Aorta (tissue), 5 donors: ENCODE measurements at regions of chr11 and their contacts with region 1.

Region 1: GRCh38 chr11:47642099-47642855 is at the start of gene MTCH2:
- DNase-seq: peak; percentile 97 to 98
- ATAC-seq: peak; percentile 99
- H3K4me3 ChIP-seq: peak within 1 kb of the TSS; percentile 23 to 58
- H3K27ac ChIP-seq: peak within 1 kb of the TSS; percentile 63 to 84
- H3K4me1 ChIP-seq: no peaks in the 10 kb centered on the region
- H3K27me3 ChIP-seq: no peaks in the 10 kb centered on the region
- total RNA-seq, gene MTCH2: 34.8 to 43.7 TPM

Region 2: DNA sequence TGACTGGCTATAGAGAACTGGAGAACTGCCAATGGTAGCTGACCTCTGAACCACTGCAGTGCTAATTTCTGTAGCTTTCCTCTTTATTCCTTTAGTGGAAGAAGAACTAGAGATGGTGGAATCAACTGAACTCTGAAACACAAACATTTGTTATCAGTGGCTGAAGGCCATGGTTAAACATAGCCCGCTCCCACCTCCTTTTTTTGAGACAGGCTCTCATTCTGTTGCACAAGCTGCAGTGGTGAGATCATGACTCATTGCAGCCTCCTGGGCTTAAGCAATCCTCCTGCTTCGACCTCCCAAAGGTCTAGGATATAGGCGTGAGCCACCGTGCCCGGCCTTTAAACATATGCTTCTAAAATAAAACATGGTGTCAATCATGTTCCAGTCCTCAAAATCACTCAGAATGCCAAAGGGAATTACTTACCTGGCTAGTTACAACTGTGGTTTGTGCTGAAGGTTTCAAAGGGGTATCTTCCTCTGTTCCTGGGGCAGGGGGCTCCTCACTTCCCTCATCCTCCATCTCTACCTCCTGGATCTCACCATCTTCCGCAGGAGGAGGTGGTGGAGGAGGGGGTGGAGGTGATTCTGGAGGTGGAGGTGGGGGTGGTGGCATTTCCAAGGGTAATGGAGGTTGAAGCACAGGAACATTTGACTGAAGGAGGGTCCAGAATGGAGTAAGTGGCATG is 81.9 kb after region 1 on chr11:
- intact Hi-C with region 1: loop called in 1 of 2 experiments (anchors 5 kb)
- DNase-seq: peak in 1 of 2 donors; percentile 58
- ATAC-seq: peak; percentile 77
- H3K4me3 ChIP-seq: no peak overlapping the region
- H3K27ac ChIP-seq: no peak overlapping the region
- H3K4me1 ChIP-seq: no peaks in the 10 kb centered on the region
- H3K27me3 ChIP-seq: no peaks in the 10 kb centered on the region

Region 3: DNA sequence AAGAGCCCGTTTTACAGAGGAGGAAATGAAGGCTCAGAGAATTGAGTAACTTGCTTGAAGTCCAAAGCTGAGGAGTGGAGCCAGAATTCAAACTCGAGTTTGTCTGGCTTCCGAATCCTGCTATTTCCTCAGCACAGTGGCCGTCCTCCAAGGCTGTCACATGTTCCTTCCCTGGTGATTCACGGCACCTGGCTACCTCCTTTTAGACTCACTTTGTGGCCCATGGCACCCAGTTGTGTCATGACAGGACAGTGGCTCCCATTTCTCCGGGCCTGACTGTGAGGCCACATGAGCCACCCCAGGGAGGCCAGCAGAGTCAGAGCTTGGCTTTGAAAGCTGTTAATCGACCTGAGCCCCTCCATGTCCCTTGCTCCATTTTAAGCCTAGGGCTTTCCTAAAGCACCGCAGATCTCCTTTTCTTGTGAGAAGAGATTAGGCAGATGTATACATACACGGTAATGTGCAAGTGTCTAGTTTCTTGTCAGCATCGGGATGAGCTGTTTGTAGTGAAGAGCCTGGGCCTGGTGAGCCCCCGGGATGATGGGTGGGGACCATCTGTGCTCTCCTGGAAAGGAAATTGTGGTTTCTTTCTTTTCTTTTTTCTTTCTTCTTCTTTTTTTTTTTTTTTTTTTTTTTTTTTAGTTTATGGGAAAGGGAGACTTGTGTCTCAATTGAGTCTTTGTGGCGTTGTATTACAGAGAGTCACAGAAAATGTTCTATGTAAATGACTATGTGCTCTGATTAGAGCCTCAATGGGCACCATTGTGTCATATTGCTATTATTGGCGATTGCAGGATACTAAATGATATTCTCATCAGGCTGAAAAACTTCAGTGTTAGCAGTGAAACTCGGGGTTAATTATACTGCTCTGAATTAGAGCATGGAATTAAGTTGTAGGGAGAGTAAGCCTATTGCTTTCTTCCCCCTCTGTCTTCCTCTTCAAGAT is 392.9 kb after region 1 on chr11:
- intact Hi-C with region 1: no loop called
- DNase-seq: peak; percentile 81
- ATAC-seq: peak; percentile 67
- H3K4me3 ChIP-seq: no peak overlapping the region
- H3K27ac ChIP-seq: no peak overlapping the region
- H3K4me1 ChIP-seq: no peaks in the 10 kb centered on the region
- H3K27me3 ChIP-seq: no peaks in the 10 kb centered on the region